HepG2 (cell line): ENCODE measurements at regions of chr11 and their contacts with region 1.

Region 1: DNA sequence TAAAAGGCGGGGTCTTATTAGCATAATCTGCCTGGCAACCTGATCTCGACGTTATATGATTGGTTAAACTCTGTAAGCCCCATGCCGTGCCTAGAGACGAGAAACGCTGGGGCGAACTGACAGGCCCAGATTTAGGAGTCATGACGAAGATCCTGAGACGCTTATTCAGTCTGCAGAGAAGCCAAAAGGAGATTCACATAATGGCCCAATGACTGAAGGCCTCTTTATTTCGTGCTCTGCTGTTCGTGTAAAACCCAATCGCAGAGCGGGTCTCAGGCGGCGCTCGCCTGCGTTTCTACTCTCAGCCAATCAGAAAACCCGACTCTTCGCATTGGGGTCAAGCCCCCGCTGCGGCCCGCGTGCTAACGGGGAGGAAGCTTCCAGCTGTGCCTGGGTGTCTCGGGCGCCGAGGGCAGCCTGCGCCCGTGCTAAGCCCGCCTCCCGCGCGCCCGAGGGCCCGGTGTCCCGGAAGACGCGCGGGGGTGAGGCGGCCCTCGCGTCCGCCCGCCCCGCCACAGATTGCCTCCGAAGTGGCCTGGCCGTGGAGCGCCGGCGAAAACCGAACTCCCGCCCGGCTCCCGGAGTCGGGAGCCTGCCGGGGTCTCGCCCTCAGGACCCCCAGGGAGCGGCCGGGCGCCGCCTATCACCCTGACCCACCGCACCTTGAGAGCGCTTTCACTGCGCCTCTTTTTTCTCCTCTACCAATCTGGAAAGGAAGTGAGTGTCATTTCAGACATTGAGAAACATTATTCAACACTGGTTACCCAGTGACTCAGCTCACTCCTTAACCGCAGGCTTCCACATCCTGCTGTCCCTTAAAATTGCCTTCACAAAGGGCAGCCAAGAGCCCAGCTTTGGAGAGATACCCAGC is 446 bp upstream of the PRDM10 start:
- DNase-seq: peak; percentile 95
- ATAC-seq: peak; percentile 82
- H3K4me3 ChIP-seq: peak overlapping the region; percentile 66 to 87 (median 80)
- H3K27ac ChIP-seq: peak overlapping the region; percentile 99
- H3K4me1 ChIP-seq: peaks cover 44% of the 10 kb centered on the region
- H3K27me3 ChIP-seq: no peaks in the 10 kb centered on the region; a peak in 1 of 5 replicates
- CTCF ChIP-seq: no peak
- EP300 ChIP-seq: no peak
- POLR2A ChIP-seq: peak; percentile 66 to 85
- RAD21 ChIP-seq: peak; percentile 60

Region 2: GRCh38 chr11:129504956-129505665 is 498.0 kb before region 1 on chr11:
- CTCF ChIA-PET with region 1: no interaction called
- POLR2A ChIA-PET with region 1: no interaction called
- in situ Hi-C with region 1: no loop called
- intact Hi-C with region 1: no loop called
- DNase-seq: no peak
- ATAC-seq: no peak
- H3K4me3 ChIP-seq: no peak overlapping the region
- H3K27ac ChIP-seq: no peak overlapping the region
- H3K4me1 ChIP-seq: no peaks in the 10 kb centered on the region
- H3K27me3 ChIP-seq: no peaks in the 10 kb centered on the region
- CTCF ChIP-seq: no peak
- EP300 ChIP-seq: no peak
- POLR2A ChIP-seq: no peak
- RAD21 ChIP-seq: no peak

Region 3: GRCh38 chr11:129790106-129790505 is 213.0 kb before region 1 on chr11:
- CTCF ChIA-PET with region 1: no interaction called
- POLR2A ChIA-PET with region 1: no interaction called
- in situ Hi-C with region 1: no loop called
- intact Hi-C with region 1: no loop called
- DNase-seq: no peak
- ATAC-seq: no peak
- H3K4me3 ChIP-seq: no peak overlapping the region
- H3K27ac ChIP-seq: no peak overlapping the region
- H3K4me1 ChIP-seq: peaks cover 66% of the 10 kb centered on the region
- H3K27me3 ChIP-seq: peaks cover 0 to 11% of the 10 kb centered on the region in 2 experiments; a peak in 2 of 5 replicates
- CTCF ChIP-seq: no peak
- EP300 ChIP-seq: no peak
- POLR2A ChIP-seq: no peak
- RAD21 ChIP-seq: no peak

Region 4: DNA sequence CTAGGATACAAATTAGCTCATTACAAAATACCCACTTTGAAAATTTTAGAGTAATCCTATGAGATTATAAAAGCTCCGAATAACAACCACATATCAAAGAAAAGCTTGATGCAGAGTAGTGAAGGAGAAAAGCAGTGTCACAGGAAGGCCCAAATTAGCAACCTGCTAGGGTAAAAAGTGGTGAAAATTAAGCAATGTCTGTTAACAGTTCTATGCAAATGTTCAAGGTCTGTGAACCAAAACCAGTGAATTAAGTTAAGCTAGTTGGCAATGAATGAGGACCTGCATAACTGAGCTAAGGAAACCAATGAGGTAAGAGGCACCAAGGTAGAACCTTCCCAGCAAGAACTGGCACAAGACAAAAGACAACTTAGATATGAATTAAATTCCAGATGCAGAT is 30.0 kb before region 1 on chr11:
- CTCF ChIA-PET with region 1: no interaction called
- POLR2A ChIA-PET with region 1: interaction called, 43 read pairs
- in situ Hi-C with region 1: no loop called
- intact Hi-C with region 1: no loop called
- DNase-seq: no peak
- ATAC-seq: no peak
- H3K4me3 ChIP-seq: no peak overlapping the region
- H3K27ac ChIP-seq: no peak overlapping the region
- H3K4me1 ChIP-seq: peaks cover 26% of the 10 kb centered on the region
- H3K27me3 ChIP-seq: no peaks in the 10 kb centered on the region
- CTCF ChIP-seq: no peak
- EP300 ChIP-seq: no peak
- POLR2A ChIP-seq: no peak
- RAD21 ChIP-seq: no peak

Region 5: DNA sequence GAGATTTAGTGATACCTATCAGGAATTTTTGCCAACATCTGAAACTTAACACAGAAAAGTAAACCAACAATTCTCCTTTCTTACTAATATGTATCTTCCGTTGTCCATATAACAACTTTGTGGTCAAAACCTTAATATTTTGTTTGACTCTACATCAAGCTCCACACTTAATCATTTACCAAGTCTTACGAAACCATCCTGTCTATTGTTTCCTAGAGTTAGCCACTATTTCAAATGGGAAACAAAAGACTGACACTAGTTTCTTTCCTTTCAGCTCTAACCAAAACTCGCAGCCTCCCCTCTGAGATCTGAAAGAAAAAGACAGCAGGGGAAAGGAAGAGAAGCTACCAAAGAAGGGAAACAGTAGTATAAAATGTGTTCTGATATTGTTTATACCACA is 26.1 kb after region 1 on chr11:
- CTCF ChIA-PET with region 1: no interaction called
- POLR2A ChIA-PET with region 1: interaction called, 17 read pairs
- in situ Hi-C with region 1: no loop called
- intact Hi-C with region 1: no loop called
- DNase-seq: peak; percentile 59
- ATAC-seq: peak; percentile 60
- H3K4me3 ChIP-seq: peak overlapping the region in 2 of 3 experiments; percentile 12 to 22; a peak in 3 of 6 replicates
- H3K27ac ChIP-seq: no peak overlapping the region
- H3K4me1 ChIP-seq: peaks cover 53% of the 10 kb centered on the region
- H3K27me3 ChIP-seq: no peaks in the 10 kb centered on the region
- CTCF ChIP-seq: no peak
- EP300 ChIP-seq: no peak
- POLR2A ChIP-seq: no peak
- RAD21 ChIP-seq: no peak

Region 6: DNA sequence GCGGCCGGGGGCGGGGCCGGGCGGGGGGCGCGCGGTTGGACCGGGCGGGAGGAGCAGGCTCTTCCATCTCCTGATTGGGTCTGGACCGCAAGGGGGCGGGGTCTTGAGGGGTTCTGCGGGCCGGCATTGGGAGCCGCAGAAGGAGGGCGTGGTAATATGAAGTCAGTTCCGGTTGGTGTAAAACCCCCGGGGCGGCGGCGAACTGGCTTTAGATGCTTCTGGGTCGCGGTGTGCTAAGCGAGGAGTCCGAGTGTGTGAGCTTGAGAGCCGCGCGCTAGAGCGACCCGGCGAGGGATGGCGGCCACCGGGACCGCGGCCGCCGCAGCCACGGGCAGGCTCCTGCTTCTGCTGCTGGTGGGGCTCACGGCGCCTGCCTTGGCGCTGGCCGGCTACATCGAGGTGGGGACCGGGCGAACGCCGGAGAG is 66.6 kb after region 1 on chr11 and contains the start of gene APLP2:
- CTCF ChIA-PET with region 1: no interaction called
- POLR2A ChIA-PET with region 1: interaction called, 70 read pairs
- in situ Hi-C with region 1: no loop called
- intact Hi-C with region 1: loop called (anchors 2 kb)
- DNase-seq: peak; percentile 97
- ATAC-seq: peak; percentile 78
- H3K4me3 ChIP-seq: peak within 1 kb of the TSS; percentile 84 to 98 (median 97)
- H3K27ac ChIP-seq: peak within 1 kb of the TSS; percentile 71
- H3K4me1 ChIP-seq: peaks cover 39% of the 10 kb centered on the region
- H3K27me3 ChIP-seq: no peaks in the 10 kb centered on the region
- CTCF ChIP-seq: 0 out of 2 replicates have a peak, but pooled peaks have one; percentile 10
- EP300 ChIP-seq: no peak
- POLR2A ChIP-seq: peak; percentile 98 to 99
- RAD21 ChIP-seq: peak; percentile 57
- total RNA-seq, gene APLP2: 154 and 315 TPM in 2 replicates

Region 7: GRCh38 chr11:130131961-130132850 is 129.1 kb after region 1 on chr11:
- CTCF ChIA-PET with region 1: no interaction called
- POLR2A ChIA-PET with region 1: interaction called, 28 read pairs
- in situ Hi-C with region 1: no loop called
- intact Hi-C with region 1: loop called (anchors 2 kb)
- DNase-seq: peak; percentile 68
- ATAC-seq: peak; percentile 70
- H3K4me3 ChIP-seq: no peak overlapping the region
- H3K27ac ChIP-seq: no peak overlapping the region
- H3K4me1 ChIP-seq: peaks cover 38% of the 10 kb centered on the region
- H3K27me3 ChIP-seq: no peaks in the 10 kb centered on the region
- CTCF ChIP-seq: peak; percentile 82
- EP300 ChIP-seq: no peak
- POLR2A ChIP-seq: no peak
- RAD21 ChIP-seq: peak; percentile 65